Sigmoid colon (tissue), 7 donors: ENCODE measurements at regions of chr18 and their contacts with region 1.

Region 1: DNA sequence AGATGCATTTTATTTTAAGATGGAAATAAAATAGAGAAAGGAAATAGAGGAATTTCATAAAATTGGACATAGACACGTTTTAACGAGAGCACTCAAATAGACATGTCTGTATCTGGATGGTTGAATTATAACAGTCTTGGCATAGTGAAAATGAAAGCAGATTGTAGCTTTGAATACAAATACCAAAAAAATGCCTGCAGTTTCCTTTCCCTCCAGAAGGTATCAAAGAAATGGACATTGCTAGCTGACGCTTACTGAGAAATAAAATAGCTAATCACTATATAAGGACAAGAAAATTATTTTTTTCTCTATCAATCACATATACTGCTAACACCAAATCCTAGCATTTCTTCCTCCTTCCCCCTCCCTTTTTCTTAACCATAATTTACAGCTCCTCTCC is 11.4 kb upstream of the MAPRE2 start:
- DNase-seq: no peak
- H3K4me3 ChIP-seq: peak overlapping the region in 3 of 4 donors; percentile 18 to 25 (median 22)
- H3K27ac ChIP-seq: peak overlapping the region in 3 of 4 donors; percentile 7 to 46 (median 32)
- H3K4me1 ChIP-seq: peaks cover 0 to 31% (median 23%) of the 10 kb centered on the region in 4 donors
- H3K27me3 ChIP-seq: no peaks in the 10 kb centered on the region
- CTCF ChIP-seq: no peak
- EP300 ChIP-seq: no peak
- POLR2A ChIP-seq: no peak

Region 2: DNA sequence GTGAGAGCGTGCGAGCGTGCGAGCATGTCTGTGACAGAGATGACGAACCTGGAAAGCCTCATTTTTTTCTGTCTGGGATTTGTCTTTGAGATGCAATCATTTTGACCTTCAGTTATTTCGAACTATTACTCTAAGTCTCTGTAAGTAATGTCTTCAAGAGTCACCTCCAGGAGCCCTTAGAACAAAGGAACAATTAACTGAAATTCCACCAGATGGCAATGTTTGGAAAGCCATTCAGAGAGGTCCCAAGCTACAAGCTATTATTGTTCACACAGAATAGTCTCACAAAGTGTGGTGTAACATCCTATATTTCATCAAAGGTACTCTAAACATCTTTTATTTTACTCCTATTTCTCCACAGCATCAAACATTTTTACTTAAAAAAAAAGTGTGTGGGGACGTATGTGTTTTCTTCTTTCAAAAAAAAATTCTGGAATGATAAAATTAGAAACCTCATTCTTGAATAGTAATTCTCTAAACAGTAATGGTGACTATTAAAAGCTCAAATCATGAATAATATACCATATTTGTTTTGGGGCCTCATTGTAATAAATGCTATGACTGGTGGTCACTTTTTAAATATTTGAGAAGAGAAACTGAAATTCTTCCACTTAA is 23.7 kb before region 1 on chr18:
- intact Hi-C with region 1: no loop called
- DNase-seq: no peak
- H3K4me3 ChIP-seq: no peak overlapping the region
- H3K27ac ChIP-seq: no peak overlapping the region
- H3K4me1 ChIP-seq: no peaks in the 10 kb centered on the region
- H3K27me3 ChIP-seq: no peaks in the 10 kb centered on the region
- CTCF ChIP-seq: peak; percentile 50 to 68 (median 62)
- EP300 ChIP-seq: no peak
- POLR2A ChIP-seq: no peak

Region 3: GRCh38 chr18:35117951-35118411 is 88.2 kb after region 1 on chr18:
- intact Hi-C with region 1: loop called (anchors 5 kb)
- DNase-seq: peak; percentile 71
- H3K4me3 ChIP-seq: peak overlapping the region in 3 of 4 donors; percentile 8 to 22 (median 16)
- H3K27ac ChIP-seq: peak overlapping the region; percentile 77 to 92 (median 81)
- H3K4me1 ChIP-seq: peaks cover 0 to 50% (median 39%) of the 10 kb centered on the region in 4 donors
- H3K27me3 ChIP-seq: no peaks in the 10 kb centered on the region
- CTCF ChIP-seq: no peak
- EP300 ChIP-seq: peak in 2 of 4 donors; percentile 55 to 78
- POLR2A ChIP-seq: no peak

Region 4: DNA sequence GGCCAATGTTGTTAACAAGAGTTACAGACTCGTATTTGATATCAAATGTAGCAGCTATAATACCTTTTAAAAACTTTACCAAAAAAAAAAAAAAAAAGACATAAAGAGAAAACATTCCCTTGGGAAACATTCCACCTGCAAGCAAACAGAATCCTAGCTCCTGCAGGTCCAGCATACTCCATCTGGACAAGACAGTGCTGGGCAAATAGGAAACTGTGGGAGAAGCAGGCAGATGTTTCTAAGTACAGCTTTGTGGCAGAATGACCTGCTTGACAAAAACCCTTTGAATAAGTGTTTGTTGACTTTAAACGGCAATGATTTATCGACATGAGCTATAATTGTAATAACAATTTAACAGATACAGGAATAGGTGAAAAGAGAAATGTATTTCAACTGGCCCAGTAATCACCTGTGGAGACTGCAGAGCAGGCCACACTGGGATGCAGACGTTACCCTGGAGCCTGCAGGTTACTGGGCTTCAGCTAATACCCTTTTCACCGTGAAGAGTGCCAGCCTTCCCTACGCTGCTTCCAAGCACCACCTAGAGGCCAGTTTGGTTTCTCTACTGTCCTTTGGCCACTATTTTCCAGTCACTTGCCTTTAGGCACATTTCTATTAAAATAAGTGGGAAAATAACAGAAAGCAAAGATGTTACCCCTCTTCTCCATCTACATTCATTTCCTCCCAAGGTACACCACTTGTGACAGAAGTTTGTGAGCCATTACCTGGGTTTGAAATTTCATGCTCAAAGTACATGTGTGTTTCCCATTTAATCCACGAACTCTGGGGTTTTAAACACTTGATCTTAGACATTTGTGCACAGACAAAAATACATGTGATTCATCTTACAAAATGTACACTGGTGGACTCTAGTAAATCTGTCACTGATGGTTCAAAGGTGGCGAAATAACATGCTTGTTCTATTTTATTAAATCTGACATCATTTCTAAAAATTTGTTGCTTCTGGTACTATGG is 114.1 kb after region 1 on chr18:
- intact Hi-C with region 1: loop called (anchors 5 kb)
- DNase-seq: peak; percentile 78
- H3K4me3 ChIP-seq: no peak overlapping the region
- H3K27ac ChIP-seq: peak overlapping the region in 2 of 4 donors; percentile 18 to 28
- H3K4me1 ChIP-seq: peaks cover 0 to 11% (median 7%) of the 10 kb centered on the region in 4 donors
- H3K27me3 ChIP-seq: no peaks in the 10 kb centered on the region
- CTCF ChIP-seq: peak; percentile 40 to 81 (median 70)
- EP300 ChIP-seq: no peak
- POLR2A ChIP-seq: no peak

Region 5: DNA sequence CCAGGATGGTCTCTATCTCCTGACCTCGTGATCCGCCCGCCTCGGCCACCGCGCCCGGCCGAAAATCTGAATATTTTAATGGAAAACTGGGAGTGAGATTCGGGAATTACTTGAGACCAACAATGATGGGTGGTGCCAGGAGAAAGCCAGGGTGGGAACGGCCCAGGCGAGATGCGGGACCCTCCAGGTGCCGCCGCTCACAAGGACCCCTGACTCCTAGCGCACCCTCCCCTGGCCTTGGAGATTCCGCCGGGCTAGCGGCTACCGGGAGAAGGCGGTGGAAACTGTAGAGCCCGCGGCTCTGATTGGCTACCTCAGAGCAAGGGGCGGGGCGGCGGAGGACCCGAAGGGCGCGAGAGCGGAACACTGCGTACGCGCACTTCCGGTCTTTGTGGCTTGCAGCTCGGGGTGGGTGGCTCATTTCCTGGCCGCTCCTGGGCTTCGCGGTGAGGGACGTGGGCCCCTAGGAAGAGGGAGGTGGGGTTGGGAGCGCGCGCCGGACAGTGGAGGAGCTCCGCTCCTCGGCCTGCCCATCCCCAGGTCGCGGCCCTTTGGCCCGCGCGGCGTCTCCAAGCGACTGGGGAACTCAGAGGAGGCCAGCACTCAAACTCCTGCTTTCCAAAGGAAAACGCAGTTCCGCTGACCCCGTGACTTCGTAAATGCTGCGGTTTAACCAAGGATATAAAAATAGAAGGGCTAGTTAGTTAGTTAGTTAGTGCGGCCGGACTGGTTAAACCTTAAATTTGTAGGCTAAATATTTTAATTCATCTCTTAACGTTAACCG is 211.1 kb after region 1 on chr18 and contains the start of gene ZNF397:
- intact Hi-C with region 1: loop called (anchors 10 kb)
- DNase-seq: peak; percentile 99
- H3K4me3 ChIP-seq: peak within 1 kb of the TSS; percentile 67 to 85 (median 78)
- H3K27ac ChIP-seq: peak within 1 kb of the TSS; percentile 96 to 98 (median 98)
- H3K4me1 ChIP-seq: peaks cover 0 to 15% (median 13%) of the 10 kb centered on the region in 4 donors
- H3K27me3 ChIP-seq: no peaks in the 10 kb centered on the region
- CTCF ChIP-seq: no peak
- EP300 ChIP-seq: no peak
- POLR2A ChIP-seq: peak; percentile 93 to 95
- total RNA-seq, gene ZNF397: 25.5 to 33.2 (median 31.5) TPM